Colonic mucosa (tissue), 4 donors: ENCODE measurements at regions of chr14 and their contacts with region 1.

Region 1: GRCh38 chr14:23562268-23563203 is 5.1 kb downstream of the AP1G2 start:
- DNase-seq: peak; percentile 37
- H3K4me3 ChIP-seq: no peak overlapping the region
- H3K27ac ChIP-seq: no peak overlapping the region
- H3K4me1 ChIP-seq: no peaks in the 10 kb centered on the region
- H3K27me3 ChIP-seq: no peaks in the 10 kb centered on the region
- CTCF ChIP-seq: peak; percentile 92

Region 2: DNA sequence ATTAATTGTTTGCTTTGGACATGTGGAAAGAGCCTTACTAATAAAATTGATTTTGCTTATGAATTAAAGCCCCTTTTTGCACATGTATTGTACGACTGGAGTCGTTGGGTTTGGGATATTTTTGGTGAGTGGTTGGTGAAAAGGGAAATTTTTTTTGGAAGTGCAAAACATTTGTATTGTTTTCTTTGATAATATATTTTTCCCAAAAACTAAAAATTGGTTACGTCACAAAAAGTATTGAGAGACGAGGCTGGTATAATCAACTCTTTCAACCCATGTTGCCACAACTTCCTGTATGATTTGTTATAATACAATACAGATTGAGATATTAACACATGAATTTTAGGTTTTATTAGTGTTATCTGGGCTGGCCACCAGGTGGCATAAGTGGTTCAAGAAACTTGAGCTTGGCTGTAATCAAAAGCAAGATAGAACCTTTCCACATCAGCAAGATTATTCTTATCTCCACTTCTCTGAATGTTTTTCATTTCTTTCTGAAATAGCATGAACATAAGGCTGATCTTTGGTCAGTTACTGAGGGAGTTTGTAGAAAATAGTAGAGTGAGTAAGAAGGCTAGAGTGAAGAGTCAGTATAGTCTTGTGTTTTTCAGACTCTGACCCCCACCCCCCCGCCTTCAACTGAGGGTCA is 84.3 kb before region 1 on chr14:
- intact Hi-C with region 1: loop called (anchors 2 kb)
- DNase-seq: peak; percentile 62
- H3K4me3 ChIP-seq: no peak overlapping the region
- H3K27ac ChIP-seq: no peak overlapping the region
- H3K4me1 ChIP-seq: no peaks in the 10 kb centered on the region
- H3K27me3 ChIP-seq: no peaks in the 10 kb centered on the region
- CTCF ChIP-seq: peak; percentile 61